ENCODE measurements at regions of chr6 and their contacts with region 1.

Region 1: GRCh38 chr6:134938896-134939295 is 11.0 kb downstream of the ALDH8A1 start:
- DNase-seq: no peak
- H3K4me3 ChIP-seq: no peak overlapping the region
- H3K27ac ChIP-seq: no peak overlapping the region
- H3K4me1 ChIP-seq: peaks cover 3 to 4% of the 10 kb centered on the region in 2 experiments; a peak in 2 of 4 replicates
- H3K27me3 ChIP-seq: no peaks in the 10 kb centered on the region
- CTCF ChIP-seq: no peak
- EP300 ChIP-seq: no peak
- RAD21 ChIP-seq: no peak

Region 2: GRCh38 chr6:134111062-134111677 is 827.7 kb before region 1 on chr6:
- CTCF ChIA-PET with region 1: interaction called, 10 read pairs
- POLR2A ChIA-PET with region 1: no interaction called
- DNase-seq: peak; percentile 64
- H3K4me3 ChIP-seq: peak overlapping the region in 1 of 2 experiments; percentile 57; a peak in 1 of 4 replicates
- H3K27ac ChIP-seq: no peak overlapping the region
- H3K4me1 ChIP-seq: no peaks in the 10 kb centered on the region
- H3K27me3 ChIP-seq: no peaks in the 10 kb centered on the region; the same call in 1 of the 2 replicates
- CTCF ChIP-seq: peak; percentile 90
- EP300 ChIP-seq: no peak
- RAD21 ChIP-seq: peak; percentile 42; the same call in 1 of the 2 replicates

Region 3: GRCh38 chr6:134152767-134153485 is 786.0 kb before region 1 on chr6:
- CTCF ChIA-PET with region 1: interaction called, 44 read pairs
- POLR2A ChIA-PET with region 1: no interaction called
- DNase-seq: no peak
- H3K4me3 ChIP-seq: no peak overlapping the region
- H3K27ac ChIP-seq: no peak overlapping the region
- H3K4me1 ChIP-seq: peaks cover 0 to 2% of the 10 kb centered on the region in 2 experiments; a peak in 1 of 4 replicates
- H3K27me3 ChIP-seq: no peaks in the 10 kb centered on the region
- CTCF ChIP-seq: no peak
- EP300 ChIP-seq: no peak
- RAD21 ChIP-seq: no peak

Region 4: GRCh38 chr6:134161036-134161435 is 777.9 kb before region 1 on chr6:
- CTCF ChIA-PET with region 1: interaction called, 44 read pairs
- POLR2A ChIA-PET with region 1: no interaction called
- DNase-seq: no peak
- H3K4me3 ChIP-seq: no peak overlapping the region
- H3K27ac ChIP-seq: no peak overlapping the region
- H3K4me1 ChIP-seq: no peaks in the 10 kb centered on the region
- H3K27me3 ChIP-seq: no peaks in the 10 kb centered on the region
- CTCF ChIP-seq: no peak
- EP300 ChIP-seq: no peak
- RAD21 ChIP-seq: no peak

Region 5: GRCh38 chr6:134174672-134175198 is 764.2 kb before region 1 on chr6:
- CTCF ChIA-PET with region 1: interaction called, 26 read pairs
- POLR2A ChIA-PET with region 1: no interaction called
- DNase-seq: peak; percentile 90
- H3K4me3 ChIP-seq: peak overlapping the region; percentile 76 to 78
- H3K27ac ChIP-seq: peak overlapping the region; percentile 76 to 94
- H3K4me1 ChIP-seq: peaks cover 16 to 32% of the 10 kb centered on the region in 2 experiments
- H3K27me3 ChIP-seq: no peaks in the 10 kb centered on the region
- CTCF ChIP-seq: no peak
- EP300 ChIP-seq: peak in 1 of 2 experiments; percentile 52; a peak in 1 of 4 replicates
- RAD21 ChIP-seq: peak; percentile 38

Region 6: DNA sequence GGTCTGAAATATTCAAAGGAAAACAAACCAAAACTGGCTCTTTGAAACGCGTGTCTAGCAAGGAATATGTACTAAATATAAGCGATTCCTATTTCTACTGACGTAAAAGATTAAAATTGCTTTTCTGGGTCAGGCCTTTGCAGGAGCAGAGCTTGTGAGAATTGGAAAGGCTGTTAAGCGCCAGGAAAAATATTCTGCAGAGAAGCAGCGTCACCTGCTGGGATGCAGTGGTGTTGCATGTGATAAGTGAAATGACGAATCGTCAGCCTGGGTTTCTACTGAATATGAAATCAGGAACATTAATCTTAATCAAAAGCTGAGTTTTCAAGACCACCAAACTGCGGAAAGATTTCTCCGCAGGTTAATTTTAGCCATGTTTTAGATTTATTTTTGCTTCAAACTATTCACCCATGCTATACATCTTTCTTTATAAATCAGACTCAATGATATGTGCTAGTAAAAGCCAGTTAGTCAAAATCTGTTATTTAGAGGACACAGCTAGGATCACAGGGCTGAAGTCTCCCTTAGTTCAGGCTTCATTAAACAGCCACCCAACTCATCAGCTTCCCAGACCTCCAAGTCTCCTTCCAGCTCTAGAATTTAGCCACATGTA is 56.4 kb before region 1 on chr6:
- CTCF ChIA-PET with region 1: interaction called, 13 read pairs
- POLR2A ChIA-PET with region 1: no interaction called
- DNase-seq: peak; percentile 44
- H3K4me3 ChIP-seq: no peak overlapping the region
- H3K27ac ChIP-seq: no peak overlapping the region
- H3K4me1 ChIP-seq: peaks cover 0 to 2% of the 10 kb centered on the region in 2 experiments; a peak in 1 of 4 replicates
- H3K27me3 ChIP-seq: no peaks in the 10 kb centered on the region
- CTCF ChIP-seq: peak; percentile 77
- EP300 ChIP-seq: no peak
- RAD21 ChIP-seq: peak; percentile 90

Region 7: GRCh38 chr6:135096403-135097135 is 157.7 kb after region 1 on chr6:
- CTCF ChIA-PET with region 1: no interaction called
- POLR2A ChIA-PET with region 1: no interaction called
- DNase-seq: no peak
- H3K4me3 ChIP-seq: no peak overlapping the region
- H3K27ac ChIP-seq: no peak overlapping the region
- H3K4me1 ChIP-seq: no peaks in the 10 kb centered on the region
- H3K27me3 ChIP-seq: no peaks in the 10 kb centered on the region
- CTCF ChIP-seq: no peak
- EP300 ChIP-seq: no peak
- RAD21 ChIP-seq: no peak

Measured in SK-N-SH (cell line).